Heart left ventricle (tissue), 16 donors: ENCODE measurements at regions of chr14 and their contacts with region 1.

Region 1: GRCh38 chr14:74595006-74595735 is 16.9 kb downstream of the LTBP2 start:
- DNase-seq: peak; percentile 87 to 91 (median 88)
- ATAC-seq: peak; percentile 45 to 78 (median 63)
- H3K4me3 ChIP-seq: no peak overlapping the region
- H3K27ac ChIP-seq: peak overlapping the region; percentile 36 to 95 (median 80)
- H3K4me1 ChIP-seq: peaks cover 25 to 95% (median 84%) of the 10 kb centered on the region in 12 donors
- H3K27me3 ChIP-seq: no peaks in the 10 kb centered on the region
- CTCF ChIP-seq: no peak
- POLR2A ChIP-seq: no peak

Region 2: DNA sequence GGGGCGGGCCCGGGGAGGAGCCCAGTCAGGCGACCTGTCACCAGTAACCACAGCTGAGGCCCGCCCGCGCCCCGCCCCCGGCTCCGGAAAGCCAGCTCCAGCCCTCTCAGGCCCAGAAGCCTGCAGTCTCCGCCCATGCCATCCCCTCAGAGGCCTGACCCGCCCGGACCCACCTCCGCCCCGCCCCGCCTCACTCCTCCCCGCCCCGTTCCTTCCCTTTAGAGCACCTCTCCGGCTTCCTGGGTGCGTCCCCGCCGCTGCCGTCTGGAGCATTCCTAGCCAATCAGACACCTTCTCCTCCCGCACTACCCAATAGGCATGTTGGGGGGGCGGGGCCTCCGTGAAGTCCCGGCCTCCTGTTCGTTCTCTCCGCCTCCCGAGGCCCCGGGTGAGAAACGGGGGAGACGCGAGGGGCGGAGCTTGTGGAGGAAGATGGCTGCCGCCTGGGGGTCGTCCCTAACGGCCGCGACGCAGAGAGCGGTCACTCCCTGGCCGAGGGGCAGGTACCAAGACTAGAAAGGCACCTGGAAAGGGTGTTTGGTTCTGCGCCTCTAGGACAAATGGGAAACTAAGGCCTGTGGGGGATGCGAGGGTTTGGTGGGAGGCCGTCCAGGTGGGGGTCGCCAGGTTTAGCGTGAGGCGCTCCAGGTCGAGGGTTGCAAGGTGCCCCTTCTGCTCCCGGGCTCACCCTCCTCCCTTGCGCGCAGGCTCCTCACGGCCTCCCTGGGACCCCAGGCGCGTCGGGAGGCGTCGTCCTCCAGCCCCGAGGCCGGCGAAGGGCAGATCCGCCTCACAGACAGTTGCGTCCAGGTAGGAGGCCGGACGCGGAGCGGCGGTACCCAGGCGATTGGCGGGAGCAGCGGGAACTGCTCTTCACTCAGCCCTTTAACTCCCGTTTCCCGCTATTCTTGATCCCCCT is 101.6 kb before region 1 on chr14 and contains the start of gene ISCA2:
- intact Hi-C with region 1: loop called in 2 of 10 experiments (anchors 2 to 10 kb)
- DNase-seq: peak; percentile 100
- ATAC-seq: peak; percentile 95 to 98 (median 98)
- H3K4me3 ChIP-seq: peak within 1 kb of the TSS; percentile 74 to 97 (median 88)
- H3K27ac ChIP-seq: peak within 1 kb of the TSS; percentile 82 to 98 (median 92)
- H3K4me1 ChIP-seq: peaks cover 0 to 62% (median 40%) of the 10 kb centered on the region in 12 donors
- H3K27me3 ChIP-seq: no peaks in the 10 kb centered on the region
- CTCF ChIP-seq: peak in 2 of 12 donors; percentile 2 to 6
- POLR2A ChIP-seq: peak in 1 of 2 donors; percentile 55
- total RNA-seq, gene ISCA2: 10.8 to 45.8 (median 36.2) TPM

Region 3: DNA sequence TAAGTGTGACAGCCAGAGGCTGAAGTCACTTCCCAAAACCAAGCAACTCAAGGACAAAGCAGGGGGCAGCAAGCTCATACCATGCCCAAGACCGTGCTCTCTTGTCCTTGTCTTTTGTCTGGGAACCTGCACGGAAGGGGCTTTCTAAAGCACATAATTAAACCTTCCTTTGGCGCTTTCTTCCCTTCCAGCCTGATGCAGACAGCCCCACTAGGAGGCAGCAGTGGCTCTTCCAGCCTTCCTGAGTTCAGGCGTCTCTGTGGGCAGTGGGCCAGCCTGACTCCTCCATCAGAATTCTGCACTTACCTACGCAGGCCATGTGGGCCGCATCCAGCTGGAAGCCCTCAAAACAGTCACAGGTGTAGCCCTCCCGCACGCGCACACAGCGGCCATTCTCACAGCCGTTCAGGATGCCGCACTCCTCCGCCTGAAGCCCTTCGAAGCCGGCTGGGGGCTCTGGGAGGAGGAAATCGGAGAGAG is 94.0 kb before region 1 on chr14:
- intact Hi-C with region 1: loop called in 2 of 10 experiments (anchors 5 to 10 kb)
- DNase-seq: peak; percentile 49 to 80 (median 68)
- ATAC-seq: peak; percentile 5 to 65 (median 38)
- H3K4me3 ChIP-seq: no peak overlapping the region
- H3K27ac ChIP-seq: no peak overlapping the region
- H3K4me1 ChIP-seq: peaks cover 0 to 8% (median 0%) of the 10 kb centered on the region in 12 donors
- H3K27me3 ChIP-seq: no peaks in the 10 kb centered on the region
- CTCF ChIP-seq: peak; percentile 25 to 68 (median 51)
- POLR2A ChIP-seq: no peak

Region 4: DNA sequence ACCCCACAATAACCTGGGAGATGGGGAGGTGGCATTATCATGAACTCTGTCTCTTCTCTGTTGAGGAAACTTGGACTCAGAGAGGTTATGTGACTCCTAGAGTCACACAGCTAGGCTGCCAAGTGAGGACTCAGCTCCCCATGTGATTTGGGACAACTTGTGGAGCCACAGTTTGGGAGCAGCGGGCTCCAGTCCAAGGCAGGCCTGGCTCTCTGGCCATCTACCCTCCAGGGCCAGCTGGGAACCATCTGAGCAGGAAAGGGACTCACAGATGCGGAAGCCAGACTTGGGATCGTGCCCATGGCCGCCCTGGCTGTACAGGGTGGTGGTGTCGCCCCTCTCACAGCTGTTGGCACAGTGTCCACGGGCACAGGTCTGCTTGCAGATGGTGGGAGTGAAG is 42.5 kb before region 1 on chr14:
- intact Hi-C with region 1: loop called in 2 of 10 experiments (anchors 5 to 10 kb)
- DNase-seq: peak; percentile 59 to 88 (median 80)
- ATAC-seq: peak in 3 of 4 donors; percentile 8 to 57 (median 35)
- H3K4me3 ChIP-seq: no peak overlapping the region
- H3K27ac ChIP-seq: peak overlapping the region in 9 of 12 donors; percentile 11 to 70 (median 49)
- H3K4me1 ChIP-seq: peaks cover 0 to 47% (median 31%) of the 10 kb centered on the region in 12 donors
- H3K27me3 ChIP-seq: no peaks in the 10 kb centered on the region
- CTCF ChIP-seq: no peak
- POLR2A ChIP-seq: no peak

Region 5: DNA sequence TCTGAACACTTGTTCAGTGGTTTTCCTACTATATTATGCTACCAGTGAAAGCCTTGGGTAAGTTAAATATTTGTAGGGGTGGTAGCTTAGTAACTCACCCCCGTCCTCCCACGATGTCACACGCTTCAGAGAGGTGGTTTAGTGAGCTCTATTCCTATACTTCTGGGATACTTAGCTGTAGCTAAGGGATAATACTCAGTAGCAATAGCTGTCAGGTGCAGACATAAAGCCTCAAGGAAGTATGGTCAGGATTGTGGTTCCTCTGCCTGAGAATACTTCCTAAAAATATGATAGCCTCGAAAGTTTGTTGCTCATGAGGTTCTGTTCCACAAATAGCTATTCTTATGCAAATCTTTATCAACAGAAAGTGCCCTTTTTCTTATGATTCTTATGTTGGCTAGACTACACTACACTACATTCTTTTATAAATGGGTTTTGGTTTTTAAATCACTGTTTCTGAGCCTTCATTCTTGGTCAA is 298.5 kb after region 1 on chr14:
- intact Hi-C with region 1: no loop called
- DNase-seq: no peak
- ATAC-seq: no peak
- H3K4me3 ChIP-seq: no peak overlapping the region
- H3K27ac ChIP-seq: peak overlapping the region in 1 of 12 donors; percentile 40
- H3K4me1 ChIP-seq: peaks cover 0 to 26% (median 10%) of the 10 kb centered on the region in 12 donors
- H3K27me3 ChIP-seq: no peaks in the 10 kb centered on the region
- CTCF ChIP-seq: no peak
- POLR2A ChIP-seq: no peak